Activated naive CD4-positive, alpha-beta T cell treated with anti-CD3 and anti-CD28 coated beads for 36 hours (primary cell): ENCODE measurements at regions of chr1 and their contacts with region 1.

Region 1: DNA sequence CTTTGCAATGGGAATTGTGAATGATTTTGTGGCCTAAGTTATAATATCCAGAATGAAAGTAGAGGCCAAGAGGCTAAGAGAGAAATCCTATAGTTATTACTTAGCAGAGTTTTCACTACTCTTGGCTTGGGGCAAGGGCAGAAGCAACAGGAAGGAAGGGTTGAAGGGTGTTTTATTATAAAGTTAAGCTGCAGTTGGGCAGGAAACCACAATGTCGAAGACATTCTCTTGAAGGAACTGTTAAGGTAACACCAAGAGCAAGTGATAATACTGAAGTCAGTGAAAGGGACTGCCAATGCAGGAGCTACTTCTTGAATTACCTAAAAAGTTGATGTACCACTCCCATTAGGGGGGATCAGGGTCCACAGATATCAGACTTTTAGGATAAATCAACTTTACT is 8.3 kb downstream of the XCL2 start:
- DNase-seq: peak; percentile 35
- H3K4me3 Mint-ChIP-seq: no peak overlapping the region
- H3K27ac Mint-ChIP-seq: no peak overlapping the region
- H3K4me1 Mint-ChIP-seq: peaks cover 60% of the 10 kb centered on the region
- H3K27me3 Mint-ChIP-seq: no peaks in the 10 kb centered on the region

Region 2: GRCh38 chr1:168466092-168466713 is 69.3 kb before region 1 on chr1:
- CTCF ChIA-PET with region 1: no interaction called
- intact Hi-C with region 1: loop called (anchors 2 kb)
- DNase-seq: peak; percentile 72
- H3K4me3 Mint-ChIP-seq: no peak overlapping the region
- H3K27ac Mint-ChIP-seq: peak overlapping the region; percentile 32
- H3K4me1 Mint-ChIP-seq: peaks cover 51% of the 10 kb centered on the region
- H3K27me3 Mint-ChIP-seq: no peaks in the 10 kb centered on the region

Region 3: GRCh38 chr1:168483539-168483938 is 52.0 kb before region 1 on chr1:
- CTCF ChIA-PET with region 1: no interaction called
- intact Hi-C with region 1: loop called (anchors 5 kb)
- DNase-seq: no peak
- H3K4me3 Mint-ChIP-seq: no peak overlapping the region
- H3K27ac Mint-ChIP-seq: no peak overlapping the region
- H3K4me1 Mint-ChIP-seq: peaks cover 30% of the 10 kb centered on the region
- H3K27me3 Mint-ChIP-seq: no peaks in the 10 kb centered on the region

Region 4: GRCh38 chr1:168520052-168520751 is 15.3 kb before region 1 on chr1:
- CTCF ChIA-PET with region 1: interaction called, 3 read pairs
- intact Hi-C with region 1: loop called (anchors 1 kb)
- DNase-seq: peak; percentile 59
- H3K4me3 Mint-ChIP-seq: peak overlapping the region; percentile 34
- H3K27ac Mint-ChIP-seq: peak overlapping the region; percentile 74
- H3K4me1 Mint-ChIP-seq: peaks cover 39% of the 10 kb centered on the region
- H3K27me3 Mint-ChIP-seq: no peaks in the 10 kb centered on the region